IMR-90 (cell line): ENCODE measurements at regions of chr21 and their contacts with region 1.

Region 1: DNA sequence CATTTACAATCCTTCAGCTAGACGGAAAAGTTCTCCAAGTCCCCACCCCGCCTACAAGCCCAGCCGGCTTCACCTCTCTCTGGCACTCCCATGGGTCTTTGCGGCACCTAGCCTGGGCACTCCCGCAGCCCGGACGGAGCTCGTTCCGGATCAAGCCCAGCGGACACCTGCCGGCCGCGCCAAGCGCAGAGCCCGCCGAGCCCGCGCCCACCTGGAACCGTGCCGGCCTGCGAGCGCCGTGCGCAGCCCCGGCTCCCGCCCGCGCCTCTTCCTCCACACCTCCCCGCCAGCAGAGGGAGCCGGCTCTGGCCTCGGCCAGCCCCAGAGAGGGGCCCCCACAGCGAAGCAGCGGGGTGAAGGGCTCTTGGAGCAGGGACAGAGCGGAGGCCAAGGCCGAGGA is 50.0 kb upstream of the KRTAP19-8 start:
- DNase-seq: no peak
- ATAC-seq: no peak
- H3K4me3 ChIP-seq: no peak overlapping the region
- H3K27ac ChIP-seq: no peak overlapping the region
- H3K4me1 ChIP-seq: no peaks in the 10 kb centered on the region
- H3K27me3 ChIP-seq: no peaks in the 10 kb centered on the region
- CTCF ChIP-seq: no peak
- POLR2A ChIP-seq: no peak
- RAD21 ChIP-seq: no peak

Region 2: GRCh38 chr21:30044445-30045064 is 1043.8 kb before region 1 on chr21:
- CTCF ChIA-PET with region 1: no interaction called
- POLR2A ChIA-PET with region 1: no interaction called
- dilution Hi-C with region 1: no loop called
- in situ Hi-C with region 1: no loop called
- intact Hi-C with region 1: loop called (anchors 1 kb)
- DNase-seq: peak; percentile 7
- ATAC-seq: peak; percentile 21; the same call in 1 of the 2 replicates
- H3K4me3 ChIP-seq: no peak overlapping the region
- H3K27ac ChIP-seq: no peak overlapping the region
- H3K4me1 ChIP-seq: no peaks in the 10 kb centered on the region
- H3K27me3 ChIP-seq: no peaks in the 10 kb centered on the region
- CTCF ChIP-seq: peak; percentile 74
- POLR2A ChIP-seq: no peak
- RAD21 ChIP-seq: peak; percentile 38; the same call in 1 of the 2 replicates

Region 3: GRCh38 chr21:30058928-30059327 is 1029.4 kb before region 1 on chr21:
- CTCF ChIA-PET with region 1: interaction called, 11 read pairs
- POLR2A ChIA-PET with region 1: no interaction called
- dilution Hi-C with region 1: no loop called
- in situ Hi-C with region 1: no loop called
- intact Hi-C with region 1: no loop called
- DNase-seq: no peak
- ATAC-seq: no peak
- H3K4me3 ChIP-seq: no peak overlapping the region
- H3K27ac ChIP-seq: no peak overlapping the region
- H3K4me1 ChIP-seq: no peaks in the 10 kb centered on the region
- H3K27me3 ChIP-seq: no peaks in the 10 kb centered on the region
- CTCF ChIP-seq: no peak
- POLR2A ChIP-seq: no peak
- RAD21 ChIP-seq: no peak

Region 4: GRCh38 chr21:30818837-30819610 is 269.3 kb before region 1 on chr21:
- CTCF ChIA-PET with region 1: no interaction called
- POLR2A ChIA-PET with region 1: no interaction called
- dilution Hi-C with region 1: no loop called
- in situ Hi-C with region 1: no loop called
- intact Hi-C with region 1: no loop called
- DNase-seq: no peak
- ATAC-seq: no peak
- H3K4me3 ChIP-seq: no peak overlapping the region
- H3K27ac ChIP-seq: no peak overlapping the region
- H3K4me1 ChIP-seq: no peaks in the 10 kb centered on the region
- H3K27me3 ChIP-seq: no peaks in the 10 kb centered on the region
- CTCF ChIP-seq: no peak
- POLR2A ChIP-seq: no peak
- RAD21 ChIP-seq: no peak

Region 5: DNA sequence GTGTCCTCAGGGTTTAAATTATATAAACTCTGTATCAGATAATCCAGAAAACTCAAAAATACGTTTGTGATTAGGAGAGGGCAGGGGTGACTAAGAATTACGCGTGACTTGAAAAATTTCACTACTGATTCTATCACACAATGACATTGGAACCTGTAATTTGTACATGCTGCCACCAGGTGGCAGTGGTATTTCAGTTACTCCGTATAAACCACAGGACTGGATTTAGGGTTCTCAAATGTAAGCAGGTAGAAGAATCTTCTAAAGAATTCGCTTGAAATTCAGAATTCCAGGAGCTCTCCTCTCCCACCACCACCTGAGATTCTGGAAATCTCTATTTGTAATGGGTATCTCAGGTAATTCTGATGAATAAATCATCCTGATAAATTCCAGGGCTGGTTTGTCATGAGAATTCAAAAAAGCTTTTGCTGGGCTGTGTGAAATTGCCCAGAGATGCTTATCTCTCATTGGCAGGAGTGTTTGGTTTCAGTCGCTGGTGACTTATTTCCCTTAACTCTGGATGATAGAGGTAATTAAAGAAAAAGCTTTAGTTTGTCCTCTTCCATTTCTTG is 257.0 kb before region 1 on chr21:
- CTCF ChIA-PET with region 1: no interaction called
- POLR2A ChIA-PET with region 1: no interaction called
- dilution Hi-C with region 1: no loop called
- in situ Hi-C with region 1: no loop called
- intact Hi-C with region 1: loop called (anchors 5 kb)
- DNase-seq: no peak
- ATAC-seq: no peak
- H3K4me3 ChIP-seq: no peak overlapping the region
- H3K27ac ChIP-seq: no peak overlapping the region
- H3K4me1 ChIP-seq: no peaks in the 10 kb centered on the region
- H3K27me3 ChIP-seq: no peaks in the 10 kb centered on the region
- CTCF ChIP-seq: 0 out of 2 replicates have a peak, but pooled peaks have one; percentile 13
- POLR2A ChIP-seq: no peak
- RAD21 ChIP-seq: no peak